Dendritic cell treated with granulocyte-macrophage colony-stimulating factor and Interleukin-4, amounts not matched to agents 40 ng/mL and 50 ng/mL, for 4 days (primary cell): ENCODE measurements at regions of chr4 and their contacts with region 1.

Region 1: DNA sequence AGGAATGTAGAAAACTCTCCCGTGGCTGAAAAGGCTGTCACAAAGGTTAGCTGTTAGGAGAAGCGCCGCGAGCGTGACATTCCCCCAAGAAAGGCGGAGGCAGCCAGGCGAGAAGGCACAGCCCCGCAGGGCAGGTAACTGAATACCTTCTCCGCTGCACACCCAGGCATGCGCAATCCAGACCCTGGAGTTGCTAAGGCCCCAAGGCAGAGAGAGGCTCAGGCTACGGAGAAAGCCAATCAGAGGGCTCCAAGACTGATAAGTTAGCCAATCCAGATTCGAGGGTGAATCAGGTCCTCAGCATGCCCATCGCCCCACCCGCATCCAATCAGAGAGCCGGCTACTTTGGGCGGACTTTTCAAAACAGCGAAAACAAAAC is 485 bp upstream of the CCNG2 start:
- H3K4me3 Mint-ChIP-seq: peak overlapping the region; percentile 97
- H3K27ac Mint-ChIP-seq: peak overlapping the region; percentile 99
- H3K4me1 Mint-ChIP-seq: peaks cover 37% of the 10 kb centered on the region
- H3K27me3 Mint-ChIP-seq: no peaks in the 10 kb centered on the region

Region 2: DNA sequence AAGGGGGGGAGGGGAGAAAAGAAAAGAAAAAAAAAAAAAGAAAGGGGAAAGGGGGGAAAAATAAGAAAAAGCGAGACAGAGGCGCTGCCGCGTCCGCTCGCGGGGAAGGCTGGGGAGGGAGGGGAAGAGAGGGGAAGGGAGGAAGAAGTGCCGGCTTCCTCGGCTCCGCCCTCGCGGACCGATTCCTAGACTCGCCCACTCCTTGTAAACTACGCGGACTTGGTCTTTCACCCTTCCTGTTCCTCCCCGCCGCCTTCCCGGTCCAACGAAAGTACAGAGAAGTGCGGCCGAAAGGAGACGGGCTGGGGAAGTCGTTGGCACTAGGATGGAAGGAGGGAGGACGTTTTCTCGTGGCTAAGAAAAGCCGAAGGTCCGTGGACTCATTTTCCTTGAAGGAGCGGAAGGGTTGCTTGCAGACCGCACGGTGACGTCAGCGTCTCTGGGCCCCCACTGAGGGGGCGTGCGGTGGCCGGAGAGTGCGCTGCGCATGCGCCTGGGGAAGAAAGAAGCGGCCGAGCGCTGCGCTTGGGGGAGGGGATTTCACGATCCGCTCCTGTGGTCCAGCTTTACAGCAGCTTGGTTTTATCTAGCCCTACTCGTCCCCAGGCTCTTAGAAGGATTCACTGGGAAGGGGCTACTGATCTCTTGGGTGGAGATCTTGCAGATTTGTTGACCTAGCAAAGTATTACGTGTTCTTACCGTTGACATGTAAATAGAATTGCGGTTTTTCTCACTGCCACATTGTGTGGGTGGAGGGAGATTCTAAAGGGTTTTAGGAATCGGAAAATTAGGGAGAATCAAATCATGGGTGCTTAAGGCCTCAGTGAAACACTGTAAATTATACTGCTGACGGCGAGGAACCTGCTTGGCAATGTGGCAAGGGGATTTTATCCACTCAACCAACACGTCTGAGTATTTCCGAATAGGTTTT is 80.4 kb before region 1 on chr4 and contains the start of gene CCNI:
- intact Hi-C with region 1: loop called (anchors 1 kb)
- H3K4me3 Mint-ChIP-seq: peak within 1 kb of the TSS; percentile 94
- H3K27ac Mint-ChIP-seq: no peak within 1 kb of the TSS
- H3K4me1 Mint-ChIP-seq: peaks cover 33% of the 10 kb centered on the region
- H3K27me3 Mint-ChIP-seq: no peaks in the 10 kb centered on the region

Region 3: GRCh38 chr4:77120886-77121508 is 35.5 kb before region 1 on chr4:
- intact Hi-C with region 1: loop called (anchors 5 kb)
- H3K4me3 Mint-ChIP-seq: no peak overlapping the region
- H3K27ac Mint-ChIP-seq: no peak overlapping the region
- H3K4me1 Mint-ChIP-seq: peaks cover 39% of the 10 kb centered on the region
- H3K27me3 Mint-ChIP-seq: no peaks in the 10 kb centered on the region

Region 4: GRCh38 chr4:77240469-77241066 is 84.0 kb after region 1 on chr4:
- intact Hi-C with region 1: no loop called
- H3K4me3 Mint-ChIP-seq: no peak overlapping the region
- H3K27ac Mint-ChIP-seq: no peak overlapping the region
- H3K4me1 Mint-ChIP-seq: no peaks in the 10 kb centered on the region
- H3K27me3 Mint-ChIP-seq: peaks cover 2% of the 10 kb centered on the region

Region 5: GRCh38 chr4:78040431-78040830 is 883.9 kb after region 1 on chr4:
- intact Hi-C with region 1: no loop called
- H3K4me3 Mint-ChIP-seq: no peak overlapping the region
- H3K27ac Mint-ChIP-seq: no peak overlapping the region
- H3K4me1 Mint-ChIP-seq: no peaks in the 10 kb centered on the region
- H3K27me3 Mint-ChIP-seq: no peaks in the 10 kb centered on the region